ENCODE measurements at regions of chr14 and their contacts with region 1.

Region 1: DNA sequence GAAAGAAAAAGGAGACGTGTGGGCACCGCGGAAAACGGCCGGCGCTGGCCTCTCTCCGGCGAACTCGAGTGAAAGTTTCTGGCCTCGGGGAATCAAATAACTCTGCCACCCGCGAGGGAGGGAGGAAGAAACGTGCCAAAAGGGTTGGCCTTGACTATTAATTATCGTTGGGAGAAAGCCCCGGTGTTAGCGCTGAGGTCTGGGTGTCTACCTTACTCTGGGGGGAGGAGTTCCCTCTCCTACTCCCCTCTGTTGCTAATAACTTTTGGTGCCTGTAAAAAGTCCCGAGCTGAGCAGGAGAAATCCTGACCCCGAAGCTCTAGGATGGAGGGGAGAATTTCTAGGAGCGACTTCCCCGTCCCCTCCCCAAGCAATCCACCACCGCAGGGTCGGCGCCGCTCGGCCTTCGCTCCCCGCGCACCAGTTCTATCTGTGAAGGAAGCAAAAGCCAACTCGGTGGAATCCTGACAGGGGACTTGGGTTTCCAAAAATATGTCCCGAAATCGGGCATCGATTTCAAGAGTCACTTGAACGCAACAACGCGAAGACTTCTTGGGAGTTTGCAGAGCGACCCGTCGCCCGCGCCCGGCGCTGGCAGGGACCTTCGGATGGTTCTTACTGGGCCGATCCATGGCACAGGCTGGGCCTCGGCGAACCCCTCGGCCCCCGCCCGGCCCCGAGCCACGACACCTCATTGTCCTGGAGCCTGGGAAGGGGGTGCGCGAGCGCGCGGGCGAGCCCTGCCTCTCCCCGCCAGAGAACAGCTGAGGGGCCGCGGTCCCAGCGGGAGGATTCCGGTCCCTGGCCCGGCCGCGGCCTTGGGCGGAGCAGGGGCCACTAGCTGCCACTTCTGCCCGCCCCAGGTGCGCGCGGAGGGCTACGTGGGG is 1.7 kb downstream of the OTX2 start:
- DNase-seq: peak in 1 of 2 experiments; percentile 71
- H3K4me3 ChIP-seq: peak overlapping the region; percentile 76
- H3K4me1 ChIP-seq: peaks cover 22% of the 10 kb centered on the region
- H3K27me3 ChIP-seq: no peaks in the 10 kb centered on the region

Region 2: DNA sequence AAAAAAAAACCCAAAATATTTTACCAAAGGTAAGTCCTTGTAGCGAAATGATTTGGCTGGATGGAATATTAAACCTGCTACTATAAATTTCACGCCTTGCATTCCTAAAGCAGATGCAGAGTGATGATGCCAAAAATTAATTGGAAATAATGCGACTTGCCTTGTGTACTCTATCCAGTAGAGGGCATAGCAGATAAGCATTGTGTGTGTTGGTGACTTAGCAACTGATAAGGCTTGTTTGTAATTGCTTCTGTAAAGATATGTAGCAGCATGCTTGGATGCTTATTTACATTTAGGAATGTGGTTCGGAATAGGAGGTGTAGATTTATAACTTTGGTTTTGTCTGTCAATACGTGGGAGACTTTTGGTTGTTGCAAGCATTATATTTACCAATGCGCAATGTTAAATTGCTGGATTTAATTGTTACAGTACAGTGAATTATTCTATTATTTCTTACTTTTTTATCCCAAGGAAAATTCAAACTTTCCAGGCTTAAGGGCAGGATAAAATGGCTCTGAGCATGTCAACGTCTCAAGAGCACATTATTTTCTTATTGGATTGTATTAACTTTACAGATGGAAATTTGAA is 148.6 kb before region 1 on chr14:
- in situ Hi-C with region 1: loop called (anchors 10 kb)
- DNase-seq: peak in 1 of 2 experiments; percentile 76
- H3K4me3 ChIP-seq: no peak overlapping the region
- H3K4me1 ChIP-seq: peaks cover 22% of the 10 kb centered on the region
- H3K27me3 ChIP-seq: no peaks in the 10 kb centered on the region

Measured in HAP-1 (cell line).